ENCODE measurements at regions of chr2 and their contacts with region 1.

Region 1: DNA sequence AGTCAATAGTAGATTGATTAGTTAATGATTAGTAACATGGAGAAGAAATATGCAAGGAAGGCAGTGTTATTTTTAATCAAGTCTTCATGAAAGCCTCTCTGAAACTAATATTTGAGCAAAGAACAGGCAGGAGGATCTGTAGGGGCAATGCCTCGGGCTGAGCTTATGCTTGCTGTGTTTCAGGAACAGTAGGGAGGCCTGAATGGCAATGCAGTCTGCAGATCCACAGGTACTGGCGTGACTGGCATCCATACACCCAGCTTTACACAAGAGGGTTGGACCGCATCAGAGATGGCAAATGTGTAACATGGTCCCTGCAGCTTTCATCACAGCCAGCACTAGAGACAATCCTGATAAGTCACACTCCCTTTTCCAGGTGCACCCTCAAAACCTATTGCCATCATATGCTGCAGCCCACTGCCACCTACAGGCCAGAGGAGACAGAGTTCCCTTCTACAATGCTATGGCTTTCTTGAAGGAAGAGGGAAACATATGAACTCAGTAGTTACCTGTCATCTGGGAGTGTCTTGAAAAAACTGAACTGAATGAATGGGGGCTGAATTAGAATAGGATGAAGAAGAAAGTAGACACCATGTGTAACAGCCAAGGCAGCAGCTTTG is 582.4 kb upstream of the RAB6C start:
- DNase-seq: peak; percentile 42
- CTCF ChIP-seq: peak; percentile 88

Region 2: DNA sequence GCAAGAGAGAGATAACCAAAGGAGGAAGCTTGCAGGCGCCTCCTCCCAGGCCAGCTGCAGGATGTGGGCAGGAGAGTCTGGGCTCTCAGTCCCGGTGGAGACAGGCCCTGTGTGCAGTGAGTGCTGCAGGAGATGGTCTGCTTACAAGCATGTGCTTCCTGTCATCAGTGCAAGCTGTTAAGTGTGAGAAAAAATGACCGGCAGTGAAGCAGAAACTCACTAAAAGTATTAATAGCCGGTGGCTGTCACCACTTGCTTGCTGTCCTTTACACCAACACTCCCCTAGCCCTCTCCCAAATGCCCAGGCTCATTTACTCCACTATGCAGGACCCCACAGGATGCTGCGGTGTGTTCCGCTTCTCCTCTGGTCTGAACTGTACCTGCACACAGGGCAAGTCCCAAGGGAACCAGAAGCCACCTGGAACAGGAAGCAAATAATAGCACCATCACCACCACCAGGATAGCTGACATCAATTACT is 642.8 kb before region 1 on chr2:
- in situ Hi-C with region 1: loop called (anchors 25 kb)
- DNase-seq: peak; percentile 63
- CTCF ChIP-seq: no peak

Region 3: DNA sequence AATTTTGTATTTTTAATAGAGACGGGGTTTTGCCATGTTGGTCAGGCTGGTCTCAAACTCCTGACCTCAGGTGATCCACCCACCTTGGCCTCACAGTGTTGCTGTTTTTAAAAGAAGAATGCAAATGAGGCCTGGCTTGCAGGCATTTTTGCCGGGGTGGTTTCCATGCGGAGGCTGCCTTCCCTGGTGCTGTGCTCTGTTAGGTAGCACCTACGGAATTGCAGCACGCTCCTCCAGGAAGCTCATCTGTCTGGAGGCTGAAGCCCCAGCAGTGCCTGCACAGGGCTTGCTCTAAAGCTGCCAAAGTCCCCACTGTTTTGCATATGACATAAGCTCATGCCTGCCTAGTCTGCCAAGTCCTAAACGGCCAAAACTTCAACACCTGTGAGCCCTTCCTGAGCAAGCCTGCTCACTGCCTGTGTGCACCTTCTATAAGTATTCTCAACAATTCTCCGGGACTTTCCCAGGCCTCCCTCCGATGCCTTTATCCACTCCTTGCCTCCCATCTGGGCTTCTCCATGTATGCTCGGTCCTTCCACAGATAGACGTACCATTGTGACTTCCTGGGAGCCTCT is 31.1 kb after region 1 on chr2:
- in situ Hi-C with region 1: no loop called
- DNase-seq: no peak
- CTCF ChIP-seq: no peak

Measured in GM13977 (cell line).